GM12878 (cell line): ENCODE measurements at regions of chr1 and their contacts with region 1.

Region 1: GRCh38 chr1:113072757-113073478 is at the start of gene LRIG2:
- DNase-seq: peak; percentile 91
- ATAC-seq: peak; percentile 98
- H3K4me3 ChIP-seq: peak within 1 kb of the TSS; percentile 91
- H3K27ac ChIP-seq: peak within 1 kb of the TSS; percentile 85
- H3K4me1 ChIP-seq: peaks cover 4% of the 10 kb centered on the region; the same call in 1 of the 2 replicates
- H3K27me3 ChIP-seq: no peaks in the 10 kb centered on the region
- CTCF ChIP-seq: peak; percentile 41 to 75 (median 65)
- EP300 ChIP-seq: 0 out of 4 replicates have a peak, but pooled peaks of 1 of the 2 experiments have one; percentile 26
- POLR2A ChIP-seq: peak; percentile 99
- RAD21 ChIP-seq: peak; percentile 56
- polyA plus RNA-seq, gene LRIG2: 0.77 to 1.3 TPM

Region 2: GRCh38 chr1:112809253-112809684 is 263.6 kb before region 1 on chr1:
- CTCF ChIA-PET with region 1: interaction called, 16 read pairs
- POLR2A ChIA-PET with region 1: no interaction called
- RAD21 ChIA-PET with region 1: interaction called, 5 read pairs
- SMC1A ChIA-PET with region 1: interaction called, 6 read pairs
- in situ Hi-C with region 1: no loop called
- intact Hi-C with region 1: no loop called
- DNase-seq: no peak
- ATAC-seq: peak; percentile 96
- H3K4me3 ChIP-seq: no peak overlapping the region
- H3K27ac ChIP-seq: no peak overlapping the region
- H3K4me1 ChIP-seq: no peaks in the 10 kb centered on the region
- H3K27me3 ChIP-seq: peaks cover 0 to 4% of the 10 kb centered on the region in 2 experiments; a peak in 1 of 4 replicates
- CTCF ChIP-seq: peak; percentile 86 to 96 (median 88)
- EP300 ChIP-seq: no peak
- POLR2A ChIP-seq: no peak
- RAD21 ChIP-seq: peak; percentile 76

Region 3: DNA sequence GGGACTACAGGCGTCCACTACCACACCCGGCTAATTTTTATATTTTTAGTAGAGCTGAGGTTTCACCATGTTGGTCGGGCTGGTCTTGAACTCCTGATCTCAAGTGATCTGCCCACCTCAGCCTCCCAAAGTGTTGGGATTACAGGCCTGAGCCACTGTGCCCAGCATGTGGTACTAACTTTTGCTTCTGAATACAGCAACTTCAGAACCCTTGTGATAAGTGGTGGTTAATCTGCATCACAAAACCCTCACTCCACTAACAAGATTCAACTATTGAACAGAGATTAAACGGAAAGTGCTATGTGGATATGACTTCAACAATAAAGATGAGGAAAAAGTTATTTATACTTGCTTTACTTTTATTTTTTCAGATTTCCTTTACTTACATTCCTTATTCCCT is 161.4 kb before region 1 on chr1:
- CTCF ChIA-PET with region 1: interaction called, 10 read pairs
- POLR2A ChIA-PET with region 1: interaction called, 3 read pairs
- RAD21 ChIA-PET with region 1: no interaction called
- SMC1A ChIA-PET with region 1: interaction called, 7 read pairs
- in situ Hi-C with region 1: no loop called
- intact Hi-C with region 1: no loop called
- DNase-seq: no peak
- ATAC-seq: no peak
- H3K4me3 ChIP-seq: no peak overlapping the region
- H3K27ac ChIP-seq: no peak overlapping the region
- H3K4me1 ChIP-seq: no peaks in the 10 kb centered on the region
- H3K27me3 ChIP-seq: no peaks in the 10 kb centered on the region
- CTCF ChIP-seq: no peak
- EP300 ChIP-seq: no peak
- POLR2A ChIP-seq: no peak
- RAD21 ChIP-seq: no peak

Region 4: GRCh38 chr1:112982853-112983536 is 89.9 kb before region 1 on chr1:
- CTCF ChIA-PET with region 1: interaction called, 12 read pairs
- POLR2A ChIA-PET with region 1: no interaction called
- RAD21 ChIA-PET with region 1: interaction called, 4 read pairs
- SMC1A ChIA-PET with region 1: no interaction called
- in situ Hi-C with region 1: no loop called
- intact Hi-C with region 1: no loop called
- DNase-seq: peak; percentile 12
- ATAC-seq: peak; percentile 62
- H3K4me3 ChIP-seq: no peak overlapping the region
- H3K27ac ChIP-seq: no peak overlapping the region
- H3K4me1 ChIP-seq: peaks cover 10% of the 10 kb centered on the region
- H3K27me3 ChIP-seq: no peaks in the 10 kb centered on the region
- CTCF ChIP-seq: no peak
- EP300 ChIP-seq: no peak
- POLR2A ChIP-seq: no peak
- RAD21 ChIP-seq: no peak

Region 5: DNA sequence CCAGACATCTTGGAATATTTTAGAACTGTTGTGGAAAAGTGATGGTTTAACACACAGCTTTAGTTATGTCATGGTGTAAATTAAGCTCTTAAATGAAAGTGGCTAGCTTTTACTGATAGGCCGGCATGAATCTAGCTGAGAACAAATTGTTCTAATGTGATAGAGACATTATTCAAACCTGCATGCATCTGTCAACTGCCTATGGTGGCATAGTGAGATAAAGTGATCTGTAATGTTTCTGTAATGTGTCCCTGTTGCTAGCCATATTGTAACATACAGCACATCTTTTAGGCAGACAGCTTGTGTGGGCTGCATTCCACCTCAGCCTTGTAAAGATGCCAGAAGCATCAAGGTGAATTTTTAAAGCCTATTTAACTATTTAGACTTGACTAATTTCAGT is 16.1 kb after region 1 on chr1:
- CTCF ChIA-PET with region 1: interaction called, 43 read pairs
- POLR2A ChIA-PET with region 1: interaction called, 3 read pairs
- RAD21 ChIA-PET with region 1: interaction called, 6 read pairs
- SMC1A ChIA-PET with region 1: interaction called, 7 read pairs
- in situ Hi-C with region 1: no loop called
- intact Hi-C with region 1: no loop called
- DNase-seq: no peak
- ATAC-seq: no peak
- H3K4me3 ChIP-seq: no peak overlapping the region
- H3K27ac ChIP-seq: no peak overlapping the region
- H3K4me1 ChIP-seq: no peaks in the 10 kb centered on the region
- H3K27me3 ChIP-seq: no peaks in the 10 kb centered on the region
- CTCF ChIP-seq: no peak
- EP300 ChIP-seq: no peak
- POLR2A ChIP-seq: no peak
- RAD21 ChIP-seq: no peak

Region 6: GRCh38 chr1:113133038-113133437 is 60.1 kb after region 1 on chr1:
- CTCF ChIA-PET with region 1: interaction called, 13 read pairs
- POLR2A ChIA-PET with region 1: no interaction called
- RAD21 ChIA-PET with region 1: interaction called, 3 read pairs
- SMC1A ChIA-PET with region 1: interaction called, 4 read pairs
- in situ Hi-C with region 1: no loop called
- intact Hi-C with region 1: loop called (anchors 10 kb)
- DNase-seq: no peak
- ATAC-seq: peak; percentile 41
- H3K4me3 ChIP-seq: no peak overlapping the region
- H3K27ac ChIP-seq: no peak overlapping the region
- H3K4me1 ChIP-seq: peaks cover 9% of the 10 kb centered on the region
- H3K27me3 ChIP-seq: no peaks in the 10 kb centered on the region
- CTCF ChIP-seq: no peak
- EP300 ChIP-seq: no peak
- POLR2A ChIP-seq: no peak
- RAD21 ChIP-seq: no peak